Sigmoid colon (tissue), 7 donors: ENCODE measurements at regions of chr1 and their contacts with region 1.

Region 1: GRCh38 chr1:163528710-163529348 is 207.1 kb downstream of the NUF2 start:
- DNase-seq: no peak
- H3K4me3 ChIP-seq: no peak overlapping the region
- H3K27ac ChIP-seq: no peak overlapping the region
- H3K4me1 ChIP-seq: no peaks in the 10 kb centered on the region
- H3K27me3 ChIP-seq: no peaks in the 10 kb centered on the region
- CTCF ChIP-seq: peak; percentile 33 to 62 (median 50)
- EP300 ChIP-seq: no peak
- POLR2A ChIP-seq: no peak

Region 2: GRCh38 chr1:163361123-163361934 is 167.5 kb before region 1 on chr1:
- intact Hi-C with region 1: loop called (anchors 5 kb)
- DNase-seq: no peak
- H3K4me3 ChIP-seq: no peak overlapping the region
- H3K27ac ChIP-seq: no peak overlapping the region
- H3K4me1 ChIP-seq: peaks cover 0 to 7% (median 0%) of the 10 kb centered on the region in 4 donors
- H3K27me3 ChIP-seq: no peaks in the 10 kb centered on the region
- CTCF ChIP-seq: peak in 2 of 4 experiments; percentile 33 to 39
- EP300 ChIP-seq: no peak
- POLR2A ChIP-seq: no peak

Region 3: DNA sequence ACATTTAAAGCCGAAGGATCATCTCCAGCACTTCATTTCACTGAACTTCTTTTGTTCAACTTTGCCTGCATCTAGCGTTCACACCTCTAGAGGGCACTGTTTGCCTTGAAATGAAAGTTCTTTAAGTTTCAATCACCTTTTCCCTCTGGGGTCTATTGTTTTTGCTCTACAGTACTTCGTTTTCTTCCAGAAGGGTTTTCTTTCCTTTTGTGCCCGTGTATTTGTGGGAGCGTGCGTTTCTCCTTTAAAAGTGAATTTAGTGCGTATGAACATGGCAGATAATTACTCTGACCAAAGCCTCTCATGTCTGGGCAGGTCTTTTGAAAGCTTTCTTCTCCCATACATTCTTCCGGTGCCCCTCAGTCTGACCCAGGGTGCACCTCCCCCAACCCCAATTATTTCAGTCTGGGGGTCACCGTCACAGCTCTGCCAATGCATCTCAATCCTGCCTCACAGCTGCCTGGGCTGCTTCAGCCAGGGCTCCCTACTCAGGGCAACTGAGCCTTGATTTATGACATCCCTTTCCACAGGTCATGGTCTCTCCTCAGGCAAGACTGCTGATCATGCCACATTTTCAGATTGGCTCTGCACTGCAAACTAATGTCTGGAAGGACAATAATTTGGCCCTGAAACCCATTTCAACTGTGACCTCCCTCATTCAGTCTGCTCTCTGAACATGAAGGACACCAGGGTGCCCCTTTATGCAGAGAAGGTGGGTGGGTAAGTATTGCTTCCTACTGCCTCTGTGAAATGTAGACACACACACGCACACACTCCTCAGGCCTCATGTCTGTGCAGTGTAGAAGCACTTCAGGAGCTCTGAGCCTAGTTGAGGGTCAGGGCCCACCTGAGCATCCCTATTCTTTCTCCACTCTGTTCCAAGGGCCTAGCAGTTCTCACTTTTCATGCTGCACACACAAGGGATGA is 118.5 kb before region 1 on chr1:
- intact Hi-C with region 1: loop called (anchors 2 kb)
- DNase-seq: no peak
- H3K4me3 ChIP-seq: no peak overlapping the region
- H3K27ac ChIP-seq: no peak overlapping the region
- H3K4me1 ChIP-seq: peaks cover 0 to 39% (median 18%) of the 10 kb centered on the region in 4 donors
- H3K27me3 ChIP-seq: no peaks in the 10 kb centered on the region
- CTCF ChIP-seq: peak; percentile 65 to 82 (median 76)
- EP300 ChIP-seq: no peak
- POLR2A ChIP-seq: no peak

Region 4: GRCh38 chr1:163561580-163562295 is 32.9 kb after region 1 on chr1:
- intact Hi-C with region 1: no loop called
- DNase-seq: no peak
- H3K4me3 ChIP-seq: no peak overlapping the region
- H3K27ac ChIP-seq: no peak overlapping the region
- H3K4me1 ChIP-seq: no peaks in the 10 kb centered on the region
- H3K27me3 ChIP-seq: no peaks in the 10 kb centered on the region
- CTCF ChIP-seq: peak in 2 of 4 experiments; percentile 13 to 44
- EP300 ChIP-seq: no peak
- POLR2A ChIP-seq: no peak

Region 5: DNA sequence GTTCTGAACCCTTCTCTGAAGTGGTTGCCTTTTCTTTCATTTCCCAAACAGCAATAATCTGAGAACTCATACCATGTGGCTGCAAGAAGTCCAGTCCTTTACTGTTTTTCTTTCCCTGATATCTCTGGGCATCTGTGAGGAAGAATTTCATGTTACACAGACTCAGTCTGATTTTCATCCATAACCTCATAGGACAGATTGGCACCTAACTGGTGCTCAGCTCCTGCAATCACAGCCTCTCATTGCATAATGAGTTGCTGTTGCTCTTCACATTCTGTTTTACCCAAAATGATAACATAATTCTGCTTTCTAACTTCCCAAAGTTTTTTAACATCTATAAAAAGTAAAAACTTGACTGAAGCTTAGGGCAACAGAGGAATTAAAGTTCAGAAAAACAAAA is 558.0 kb after region 1 on chr1:
- intact Hi-C with region 1: no loop called
- DNase-seq: no peak
- H3K4me3 ChIP-seq: no peak overlapping the region
- H3K27ac ChIP-seq: no peak overlapping the region
- H3K4me1 ChIP-seq: no peaks in the 10 kb centered on the region
- H3K27me3 ChIP-seq: no peaks in the 10 kb centered on the region
- CTCF ChIP-seq: no peak
- EP300 ChIP-seq: no peak
- POLR2A ChIP-seq: no peak